ENCODE measurements at regions of chr5 and their contacts with region 1.

Region 1: GRCh38 chr5:81425569-81425968 is 31.6 kb upstream of the ACOT12 start:
- DNase-seq: no peak
- H3K4me3 ChIP-seq: no peak overlapping the region
- H3K27ac ChIP-seq: peak overlapping the region in 2 of 4 donors; percentile 35 to 52
- H3K4me1 ChIP-seq: peaks cover 0 to 38% (median 25%) of the 10 kb centered on the region in 4 donors
- H3K27me3 ChIP-seq: no peaks in the 10 kb centered on the region
- CTCF ChIP-seq: peak; percentile 37 to 68 (median 44)
- EP300 ChIP-seq: no peak
- POLR2A ChIP-seq: no peak

Region 2: GRCh38 chr5:82225525-82226172 is 800.1 kb after region 1 on chr5:
- intact Hi-C with region 1: loop called (anchors 1 kb)
- DNase-seq: peak; percentile 69
- H3K4me3 ChIP-seq: no peak overlapping the region
- H3K27ac ChIP-seq: no peak overlapping the region
- H3K4me1 ChIP-seq: peaks cover 0 to 3% (median 0%) of the 10 kb centered on the region in 4 donors
- H3K27me3 ChIP-seq: no peaks in the 10 kb centered on the region
- CTCF ChIP-seq: peak; percentile 68 to 83 (median 74)
- EP300 ChIP-seq: no peak
- POLR2A ChIP-seq: no peak

Measured in sigmoid colon (tissue), 7 donors.